ENCODE measurements at regions of chr9 and their contacts with region 1.

Region 1: GRCh38 chr9:75890472-75891276 is at the start of gene PCSK5:
- DNase-seq: peak; percentile 96
- H3K4me3 ChIP-seq: peak within 1 kb of the TSS; percentile 63
- H3K27ac ChIP-seq: peak within 1 kb of the TSS; percentile 84
- H3K4me1 ChIP-seq: no peaks in the 10 kb centered on the region
- H3K27me3 ChIP-seq: no peaks in the 10 kb centered on the region
- CTCF ChIP-seq: no peak
- total RNA-seq, gene PCSK5: 36.7 to 55.3 TPM

Region 2: GRCh38 chr9:74810200-74810599 is 1080.5 kb before region 1 on chr9:
- intact Hi-C with region 1: no loop called
- DNase-seq: no peak
- H3K4me3 ChIP-seq: no peak overlapping the region
- H3K27ac ChIP-seq: no peak overlapping the region
- H3K4me1 ChIP-seq: no peaks in the 10 kb centered on the region
- H3K27me3 ChIP-seq: no peaks in the 10 kb centered on the region
- CTCF ChIP-seq: no peak

Region 3: DNA sequence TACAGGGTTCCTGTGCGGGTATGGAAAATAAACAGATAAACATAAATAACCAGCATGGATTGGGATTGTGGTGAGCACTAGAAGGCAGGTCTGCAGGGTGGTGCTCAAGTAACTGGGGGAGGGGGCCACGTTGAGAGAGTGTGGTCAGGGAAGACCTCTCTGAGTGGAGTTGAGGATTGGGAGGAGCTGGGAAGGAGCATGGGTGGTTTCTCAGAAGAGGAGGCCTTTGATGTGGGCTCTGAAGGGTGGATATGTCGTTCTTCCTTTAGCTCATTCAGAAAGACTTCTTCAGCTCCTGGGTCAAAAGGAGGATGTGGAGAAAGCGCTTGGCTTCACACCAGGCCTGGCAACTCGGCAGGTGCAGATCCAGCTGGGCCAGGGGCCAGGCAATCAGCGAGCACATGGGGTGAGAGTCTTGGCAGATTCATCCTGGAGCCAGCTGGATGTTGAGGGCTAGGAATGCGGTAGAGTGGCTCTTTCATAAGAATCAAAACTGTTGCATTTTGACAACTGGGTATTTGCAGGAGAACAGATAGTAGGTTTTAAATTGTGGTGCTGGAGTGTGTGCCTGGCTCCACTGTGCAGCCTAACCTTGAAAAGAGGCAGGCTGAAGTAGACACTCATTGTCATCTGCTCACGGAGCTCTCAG is 71.5 kb after region 1 on chr9:
- intact Hi-C with region 1: loop called (anchors 5 kb)
- DNase-seq: peak; percentile 35
- H3K4me3 ChIP-seq: no peak overlapping the region
- H3K27ac ChIP-seq: no peak overlapping the region
- H3K4me1 ChIP-seq: no peaks in the 10 kb centered on the region
- H3K27me3 ChIP-seq: no peaks in the 10 kb centered on the region
- CTCF ChIP-seq: no peak

Region 4: GRCh38 chr9:76153902-76154629 is 263.4 kb after region 1 on chr9:
- intact Hi-C with region 1: loop called (anchors 10 kb)
- DNase-seq: no peak
- H3K4me3 ChIP-seq: no peak overlapping the region
- H3K27ac ChIP-seq: peak overlapping the region; percentile 40
- H3K4me1 ChIP-seq: no peaks in the 10 kb centered on the region
- H3K27me3 ChIP-seq: no peaks in the 10 kb centered on the region
- CTCF ChIP-seq: no peak

Measured in colonic mucosa (tissue), 4 donors.